HepG2 (cell line): ENCODE measurements at regions of chr1 and their contacts with region 1.

Region 1: DNA sequence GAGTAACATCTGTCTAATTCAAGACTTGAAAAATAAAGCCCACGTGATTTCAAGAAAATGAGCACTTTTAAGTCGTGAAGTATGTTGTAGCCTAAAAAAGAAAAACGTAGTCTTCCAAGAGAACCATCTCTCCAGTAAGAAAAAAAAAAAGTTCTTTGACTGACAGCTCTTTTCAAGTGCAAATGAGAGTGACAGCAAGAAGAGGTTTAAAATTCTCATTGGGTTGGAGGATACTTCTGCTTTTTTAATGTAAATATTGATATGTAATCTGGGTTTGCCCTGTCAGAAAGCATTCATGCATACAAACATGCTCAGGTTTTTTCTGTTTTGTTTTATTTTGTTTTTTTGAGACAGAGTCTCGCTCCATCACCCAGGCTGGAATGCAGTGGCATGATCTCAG is 32.3 kb upstream of the PRDM2 start:
- DNase-seq: no peak
- ATAC-seq: no peak
- H3K4me3 ChIP-seq: no peak overlapping the region
- H3K27ac ChIP-seq: no peak overlapping the region
- H3K4me1 ChIP-seq: no peaks in the 10 kb centered on the region
- H3K27me3 ChIP-seq: peaks cover 3 to 12% of the 10 kb centered on the region in 2 experiments; a peak in 2 of 5 replicates
- CTCF ChIP-seq: no peak
- EP300 ChIP-seq: no peak
- POLR2A ChIP-seq: no peak
- RAD21 ChIP-seq: no peak

Region 2: GRCh38 chr1:13517193-13517812 is 150.4 kb before region 1 on chr1:
- CTCF ChIA-PET with region 1: no interaction called
- POLR2A ChIA-PET with region 1: no interaction called
- in situ Hi-C with region 1: no loop called
- intact Hi-C with region 1: no loop called
- DNase-seq: peak; percentile 5
- ATAC-seq: peak; percentile 51; the same call in 2 of the 3 replicates
- H3K4me3 ChIP-seq: no peak overlapping the region
- H3K27ac ChIP-seq: no peak overlapping the region
- H3K4me1 ChIP-seq: no peaks in the 10 kb centered on the region
- H3K27me3 ChIP-seq: peaks cover 4 to 25% of the 10 kb centered on the region in 2 experiments; a peak in 3 of 5 replicates
- CTCF ChIP-seq: 0 out of 2 replicates have a peak, but pooled peaks have one; percentile 26
- EP300 ChIP-seq: no peak
- POLR2A ChIP-seq: no peak
- RAD21 ChIP-seq: no peak

Region 3: DNA sequence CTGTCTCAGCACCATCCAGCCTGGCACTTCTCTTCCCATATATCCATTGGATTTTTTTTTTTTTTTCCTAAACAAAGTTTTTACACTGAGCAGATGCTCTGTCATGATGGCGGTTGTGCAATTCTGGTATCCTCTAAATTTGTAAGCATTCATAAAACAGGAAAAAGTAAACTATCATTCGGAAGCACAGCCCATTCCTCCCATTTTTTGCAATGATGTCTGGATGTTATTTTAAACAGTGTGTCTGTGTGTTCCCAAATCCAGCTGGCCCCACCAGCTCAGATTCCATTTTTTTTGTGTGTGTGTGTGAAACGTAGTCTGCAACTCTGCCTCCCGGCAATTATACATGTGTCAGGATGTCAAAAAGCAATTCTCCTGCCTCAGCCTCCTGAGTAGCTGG is 50.6 kb before region 1 on chr1:
- CTCF ChIA-PET with region 1: no interaction called
- POLR2A ChIA-PET with region 1: no interaction called
- in situ Hi-C with region 1: no loop called
- intact Hi-C with region 1: no loop called
- DNase-seq: no peak
- ATAC-seq: no peak
- H3K4me3 ChIP-seq: no peak overlapping the region
- H3K27ac ChIP-seq: no peak overlapping the region
- H3K4me1 ChIP-seq: no peaks in the 10 kb centered on the region
- H3K27me3 ChIP-seq: peaks cover 2 to 8% of the 10 kb centered on the region in 2 experiments; a peak in 2 of 5 replicates
- CTCF ChIP-seq: no peak
- EP300 ChIP-seq: no peak
- POLR2A ChIP-seq: no peak
- RAD21 ChIP-seq: no peak

Region 4: DNA sequence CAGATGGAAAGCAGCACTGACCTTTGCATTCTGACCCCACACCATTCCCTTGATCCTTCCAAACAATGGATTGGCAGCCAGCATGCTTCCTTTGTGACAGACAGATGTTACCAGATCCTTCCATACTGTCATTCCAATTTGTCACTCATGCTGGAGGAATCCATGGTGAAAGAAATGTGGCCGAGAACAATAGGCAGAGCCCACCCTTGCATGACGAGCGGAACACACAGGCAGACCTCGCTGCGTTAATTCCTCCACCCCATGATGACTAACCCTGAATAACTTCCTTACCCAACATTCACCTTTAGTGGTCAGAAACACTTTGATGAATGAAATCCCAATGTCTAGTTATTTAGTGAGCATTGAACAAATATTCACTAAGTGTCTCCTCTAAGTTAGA is 39.0 kb before region 1 on chr1:
- CTCF ChIA-PET with region 1: no interaction called
- POLR2A ChIA-PET with region 1: no interaction called
- in situ Hi-C with region 1: no loop called
- intact Hi-C with region 1: no loop called
- DNase-seq: no peak
- ATAC-seq: no peak
- H3K4me3 ChIP-seq: no peak overlapping the region
- H3K27ac ChIP-seq: no peak overlapping the region
- H3K4me1 ChIP-seq: no peaks in the 10 kb centered on the region
- H3K27me3 ChIP-seq: peaks cover 0 to 4% of the 10 kb centered on the region in 2 experiments; a peak in 2 of 5 replicates
- CTCF ChIP-seq: no peak
- EP300 ChIP-seq: no peak
- POLR2A ChIP-seq: no peak
- RAD21 ChIP-seq: no peak

Region 5: DNA sequence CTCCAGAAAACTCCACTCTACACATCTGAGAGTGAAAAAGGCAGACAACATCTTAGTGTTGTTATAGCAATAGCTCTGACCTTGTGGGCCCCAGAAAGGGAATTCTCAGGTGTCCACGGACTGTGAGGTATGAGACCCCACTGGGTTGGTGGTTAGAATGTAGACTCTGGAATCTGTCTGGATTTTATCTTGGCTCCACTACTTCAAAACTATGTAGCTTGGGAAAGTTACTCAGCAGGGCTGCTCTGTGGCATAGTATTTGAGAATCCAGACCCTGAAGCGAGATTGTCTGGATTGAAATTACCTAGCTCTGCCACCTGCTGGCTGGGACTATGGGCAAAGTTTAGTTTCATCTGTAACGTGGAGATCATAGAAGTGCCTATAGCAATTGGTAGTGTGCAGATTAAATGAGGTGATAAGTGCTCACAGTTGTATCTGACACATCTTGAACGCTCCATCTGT is 58.1 kb after region 1 on chr1:
- CTCF ChIA-PET with region 1: interaction called, 10 read pairs
- POLR2A ChIA-PET with region 1: no interaction called
- in situ Hi-C with region 1: no loop called
- intact Hi-C with region 1: loop called (anchors 5 kb)
- DNase-seq: peak; percentile 20
- ATAC-seq: peak; percentile 66
- H3K4me3 ChIP-seq: no peak overlapping the region
- H3K27ac ChIP-seq: no peak overlapping the region
- H3K4me1 ChIP-seq: no peaks in the 10 kb centered on the region
- H3K27me3 ChIP-seq: peaks cover 1 to 34% of the 10 kb centered on the region in 2 experiments; a peak in 4 of 5 replicates
- CTCF ChIP-seq: peak; percentile 44
- EP300 ChIP-seq: no peak
- POLR2A ChIP-seq: no peak
- RAD21 ChIP-seq: no peak

Region 6: GRCh38 chr1:13807213-13807612 is 139.5 kb after region 1 on chr1:
- CTCF ChIA-PET with region 1: interaction called, 6 read pairs
- POLR2A ChIA-PET with region 1: no interaction called
- in situ Hi-C with region 1: loop called (anchors 5 kb)
- intact Hi-C with region 1: no loop called
- DNase-seq: peak; percentile 27
- ATAC-seq: peak; percentile 67
- H3K4me3 ChIP-seq: no peak overlapping the region
- H3K27ac ChIP-seq: no peak overlapping the region
- H3K4me1 ChIP-seq: no peaks in the 10 kb centered on the region
- H3K27me3 ChIP-seq: no peaks in the 10 kb centered on the region
- CTCF ChIP-seq: peak; percentile 47
- EP300 ChIP-seq: no peak
- POLR2A ChIP-seq: no peak
- RAD21 ChIP-seq: no peak